ENCODE measurements at regions of chr9 and their contacts with region 1.

Region 1: DNA sequence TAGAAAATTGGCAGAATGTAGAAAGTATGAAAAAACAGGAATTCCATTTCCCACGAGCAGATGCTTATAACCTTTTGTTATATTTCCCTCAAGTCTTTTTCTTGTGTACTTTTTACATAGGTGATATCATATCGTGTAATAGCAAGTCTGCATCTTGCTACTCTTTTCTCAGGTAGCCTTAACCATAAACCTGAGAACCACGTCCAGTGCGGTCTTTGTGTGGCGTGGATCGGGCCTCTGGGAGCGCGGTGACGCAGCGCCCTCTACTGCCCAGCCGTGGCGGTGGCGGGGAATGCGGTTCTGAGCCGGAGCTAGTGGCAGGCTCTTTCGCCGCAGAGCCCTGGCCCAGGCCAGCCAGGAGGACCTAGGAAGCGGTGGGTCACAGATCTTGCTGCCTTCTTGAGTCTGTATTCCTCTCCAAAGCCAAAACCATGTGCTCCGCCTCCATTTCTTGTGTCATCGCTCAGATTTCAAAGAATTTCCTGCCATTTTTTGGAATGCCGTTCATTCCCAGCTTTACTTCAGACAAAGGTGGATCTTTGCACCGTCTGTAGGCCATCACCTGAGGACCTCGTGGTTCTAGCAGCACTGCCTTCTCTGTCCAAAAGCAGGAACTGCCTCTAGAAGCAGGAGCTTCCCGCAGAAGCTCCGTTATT is 71.9 kb downstream of the MVB12B start:
- DNase-seq: peak; percentile 86
- ATAC-seq: peak; percentile 30
- H3K4me3 Mint-ChIP-seq: no peak overlapping the region
- H3K27ac Mint-ChIP-seq: no peak overlapping the region
- H3K4me1 Mint-ChIP-seq: peaks cover 48% of the 10 kb centered on the region
- H3K27me3 Mint-ChIP-seq: no peaks in the 10 kb centered on the region

Region 2: DNA sequence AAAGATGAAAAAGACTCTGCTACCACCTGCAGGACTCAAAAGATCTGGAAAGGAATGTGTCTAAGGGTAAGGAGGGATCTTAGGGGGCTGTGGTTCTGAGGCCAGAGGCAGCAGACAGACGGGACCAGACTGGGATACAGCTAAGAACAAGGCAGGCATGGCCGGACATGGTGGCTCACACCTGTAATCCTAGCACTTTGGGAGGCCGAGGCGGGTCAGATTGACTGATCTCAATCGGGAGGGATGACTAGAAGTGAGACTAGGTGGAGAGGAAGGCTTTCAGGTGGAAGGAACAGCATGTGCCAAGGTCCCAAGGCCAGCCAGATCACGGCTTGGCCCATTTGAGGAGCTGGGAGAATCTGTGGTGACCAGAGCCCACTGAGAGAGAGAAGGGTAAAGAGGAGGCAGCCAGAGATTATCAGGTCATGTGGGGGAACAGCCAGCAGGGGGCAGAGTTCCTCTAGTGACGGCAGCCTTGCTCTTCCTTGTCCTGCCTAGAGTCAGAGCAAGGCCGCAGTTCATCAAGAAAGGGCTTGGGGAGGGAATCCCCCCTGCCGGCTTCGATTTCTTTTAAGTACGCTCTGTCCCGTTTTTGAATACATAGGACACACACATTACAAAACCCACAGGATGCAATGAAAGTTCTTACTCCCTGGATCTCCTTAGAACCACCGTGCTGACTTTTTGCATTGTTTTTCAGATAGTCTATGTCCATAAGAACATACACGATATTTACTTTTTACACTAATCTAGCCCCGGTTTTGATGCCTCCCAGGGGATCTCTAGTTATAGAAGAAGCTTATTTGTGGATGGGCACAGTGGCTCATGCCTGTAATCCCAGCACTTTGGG is 1624.2 kb before region 1 on chr9:
- CTCF ChIA-PET with region 1: no interaction called
- POLR2A ChIA-PET with region 1: no interaction called
- intact Hi-C with region 1: no loop called
- DNase-seq: peak; percentile 92
- ATAC-seq: peak; percentile 50
- H3K4me3 Mint-ChIP-seq: no peak overlapping the region
- H3K27ac Mint-ChIP-seq: no peak overlapping the region
- H3K4me1 Mint-ChIP-seq: peaks cover 29% of the 10 kb centered on the region
- H3K27me3 Mint-ChIP-seq: peaks cover 48% of the 10 kb centered on the region

Region 3: DNA sequence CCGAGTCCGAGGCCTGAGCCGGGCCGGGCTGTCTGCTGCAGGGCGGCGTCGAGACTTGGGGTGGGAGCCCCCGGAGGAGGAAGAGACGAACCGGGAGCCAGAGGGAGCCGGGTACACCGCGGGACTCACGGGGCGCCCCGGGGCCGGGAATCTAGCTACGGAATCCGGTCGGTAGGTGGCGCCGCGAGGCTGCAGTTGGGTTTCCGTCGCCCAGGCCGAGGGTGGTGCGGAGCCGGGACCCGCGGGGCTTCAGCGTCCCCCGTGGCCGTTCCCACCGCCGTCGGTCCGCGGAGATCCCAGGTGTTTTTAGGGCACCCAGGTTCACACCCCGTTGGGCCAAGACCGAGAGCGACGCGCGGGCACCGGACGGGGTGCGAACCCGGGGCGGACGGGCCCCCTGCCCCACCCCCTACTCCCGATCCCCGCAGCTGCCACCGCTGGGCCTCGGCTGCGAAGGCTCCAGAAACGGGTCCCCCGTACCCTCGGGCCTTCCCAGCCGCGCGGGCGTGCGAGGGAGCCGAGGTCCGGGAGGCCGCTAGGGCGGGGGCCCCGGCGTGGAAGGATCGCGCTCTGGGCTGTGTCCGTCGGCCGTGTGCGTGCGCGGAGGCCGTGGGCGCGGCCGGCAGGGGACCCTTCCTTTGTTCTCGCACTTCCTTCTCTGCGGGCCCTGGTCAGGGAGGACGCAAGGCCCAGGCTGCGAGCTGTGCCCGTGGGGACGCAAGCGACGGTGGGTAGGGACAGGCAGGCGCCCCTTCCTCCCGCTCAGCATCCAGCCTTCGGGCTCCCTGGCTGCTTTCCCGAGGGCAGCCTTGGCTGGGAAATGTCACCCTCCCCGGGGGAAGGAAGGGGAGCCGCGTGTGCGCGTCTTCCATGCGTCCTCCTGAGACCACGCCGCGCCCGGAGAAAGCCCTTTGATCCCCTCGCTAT is 990.3 kb before region 1 on chr9:
- CTCF ChIA-PET with region 1: interaction called, 12 read pairs
- POLR2A ChIA-PET with region 1: interaction called, 3 read pairs
- intact Hi-C with region 1: loop called (anchors 2 to 5 kb)
- DNase-seq: peak; percentile 89
- ATAC-seq: peak; percentile 76
- H3K4me3 Mint-ChIP-seq: peak overlapping the region; percentile 62
- H3K27ac Mint-ChIP-seq: no peak overlapping the region
- H3K4me1 Mint-ChIP-seq: peaks cover 13% of the 10 kb centered on the region
- H3K27me3 Mint-ChIP-seq: peaks cover 27% of the 10 kb centered on the region

Region 4: GRCh38 chr9:126317513-126317912 is 81.0 kb before region 1 on chr9:
- CTCF ChIA-PET with region 1: interaction called, 33 read pairs
- POLR2A ChIA-PET with region 1: interaction called, 4 read pairs
- intact Hi-C with region 1: loop called (anchors 1 to 5 kb)
- DNase-seq: peak; percentile 60
- ATAC-seq: peak; percentile 53
- H3K4me3 Mint-ChIP-seq: no peak overlapping the region
- H3K27ac Mint-ChIP-seq: no peak overlapping the region
- H3K4me1 Mint-ChIP-seq: no peaks in the 10 kb centered on the region
- H3K27me3 Mint-ChIP-seq: no peaks in the 10 kb centered on the region

Region 5: GRCh38 chr9:126334721-126335621 is 63.6 kb before region 1 on chr9:
- CTCF ChIA-PET with region 1: interaction called, 11 read pairs
- POLR2A ChIA-PET with region 1: no interaction called
- intact Hi-C with region 1: no loop called
- DNase-seq: no peak
- ATAC-seq: no peak
- H3K4me3 Mint-ChIP-seq: no peak overlapping the region
- H3K27ac Mint-ChIP-seq: no peak overlapping the region
- H3K4me1 Mint-ChIP-seq: peaks cover 17% of the 10 kb centered on the region
- H3K27me3 Mint-ChIP-seq: no peaks in the 10 kb centered on the region

Region 6: GRCh38 chr9:126439402-126439765 is 40.9 kb after region 1 on chr9:
- CTCF ChIA-PET with region 1: interaction called, 5 read pairs
- POLR2A ChIA-PET with region 1: no interaction called
- intact Hi-C with region 1: loop called in 1 of 2 experiments (anchors 1 kb)
- DNase-seq: peak; percentile 32
- ATAC-seq: peak; percentile 98
- H3K4me3 Mint-ChIP-seq: no peak overlapping the region
- H3K27ac Mint-ChIP-seq: peak overlapping the region; percentile 42
- H3K4me1 Mint-ChIP-seq: peaks cover 19% of the 10 kb centered on the region
- H3K27me3 Mint-ChIP-seq: no peaks in the 10 kb centered on the region